Dendritic cell treated with granulocyte-macrophage colony-stimulating factor and Interleukin-4, amounts not matched to agents 40 ng/mL and 50 ng/mL, for 4 days (primary cell): ENCODE measurements at regions of chr5 and their contacts with region 1.

Region 1: GRCh38 chr5:154038707-154039457 is at the starts of genes FAM114A2 and MFAP3:
- H3K4me3 Mint-ChIP-seq: peak within 1 kb of the TSS; percentile 90
- H3K27ac Mint-ChIP-seq: peak within 1 kb of the TSS; percentile 88
- H3K4me1 Mint-ChIP-seq: peaks cover 34% of the 10 kb centered on the region
- H3K27me3 Mint-ChIP-seq: no peaks in the 10 kb centered on the region

Region 2: DNA sequence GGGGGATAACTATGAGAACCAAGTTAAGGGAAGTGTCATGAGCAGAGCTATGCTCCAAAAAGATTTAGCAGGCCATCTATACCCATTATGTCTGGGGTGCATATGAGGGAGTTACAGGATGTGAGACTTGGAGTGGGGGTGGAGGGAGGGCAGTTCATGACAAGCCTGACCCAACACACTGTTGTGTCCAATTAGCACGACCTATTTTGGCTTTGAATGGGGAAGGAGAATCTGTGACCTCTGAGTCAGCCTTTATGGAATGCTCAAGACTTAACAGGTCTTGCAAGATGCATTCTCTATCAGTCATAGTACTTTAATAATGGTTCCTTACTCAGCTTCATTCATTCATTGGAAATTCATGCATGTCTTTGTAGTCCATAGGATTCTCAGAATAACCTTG is 476.7 kb before region 1 on chr5:
- intact Hi-C with region 1: no loop called
- H3K4me3 Mint-ChIP-seq: no peak overlapping the region
- H3K27ac Mint-ChIP-seq: no peak overlapping the region
- H3K4me1 Mint-ChIP-seq: no peaks in the 10 kb centered on the region
- H3K27me3 Mint-ChIP-seq: no peaks in the 10 kb centered on the region

Region 3: DNA sequence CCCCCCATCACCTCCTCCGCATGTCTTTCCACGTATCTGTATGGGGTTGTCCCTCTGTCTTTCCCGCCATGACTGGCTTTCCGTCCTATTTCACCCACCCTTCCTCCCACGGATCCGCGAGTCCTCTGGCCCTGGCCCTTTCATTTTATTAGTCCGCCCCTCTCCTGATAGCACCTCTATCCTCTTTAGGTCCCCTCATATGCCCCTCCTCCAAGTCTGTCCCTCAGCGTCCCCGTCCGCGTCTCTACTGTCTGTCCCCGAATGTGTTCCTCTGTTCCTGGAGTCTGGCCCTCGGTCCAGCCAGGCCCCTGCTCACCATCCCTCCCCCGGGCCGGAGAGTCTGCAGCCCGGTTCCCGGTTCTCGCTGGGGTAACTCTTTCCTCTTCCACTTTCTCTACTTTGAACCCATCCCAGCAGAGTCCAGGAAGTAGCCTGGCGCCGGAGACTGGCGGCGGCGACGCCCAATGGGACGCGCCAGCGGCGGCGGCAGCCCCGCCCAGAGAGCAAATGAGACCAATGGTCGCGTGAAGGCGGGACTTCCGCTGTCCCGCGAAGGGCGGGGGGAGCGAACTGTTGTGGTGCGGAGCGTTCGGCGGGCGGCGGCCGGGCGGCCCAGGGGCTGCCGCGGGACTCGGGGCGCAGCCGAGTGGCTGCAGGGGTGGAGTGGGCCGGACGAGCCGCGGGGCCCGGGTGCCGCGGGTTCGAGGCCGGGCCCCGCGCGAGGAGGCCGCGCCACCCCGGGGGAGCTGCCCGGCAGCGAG is 406.7 kb after region 1 on chr5 and contains the start of gene SAP30L:
- intact Hi-C with region 1: loop called (anchors 2 kb)
- H3K4me3 Mint-ChIP-seq: peak within 1 kb of the TSS; percentile 95
- H3K27ac Mint-ChIP-seq: peak within 1 kb of the TSS; percentile 90
- H3K4me1 Mint-ChIP-seq: peaks cover 36% of the 10 kb centered on the region
- H3K27me3 Mint-ChIP-seq: no peaks in the 10 kb centered on the region